CD8-positive, alpha-beta memory T cell (primary cell): ENCODE measurements at regions of chr1 and their contacts with region 1.

Region 1: DNA sequence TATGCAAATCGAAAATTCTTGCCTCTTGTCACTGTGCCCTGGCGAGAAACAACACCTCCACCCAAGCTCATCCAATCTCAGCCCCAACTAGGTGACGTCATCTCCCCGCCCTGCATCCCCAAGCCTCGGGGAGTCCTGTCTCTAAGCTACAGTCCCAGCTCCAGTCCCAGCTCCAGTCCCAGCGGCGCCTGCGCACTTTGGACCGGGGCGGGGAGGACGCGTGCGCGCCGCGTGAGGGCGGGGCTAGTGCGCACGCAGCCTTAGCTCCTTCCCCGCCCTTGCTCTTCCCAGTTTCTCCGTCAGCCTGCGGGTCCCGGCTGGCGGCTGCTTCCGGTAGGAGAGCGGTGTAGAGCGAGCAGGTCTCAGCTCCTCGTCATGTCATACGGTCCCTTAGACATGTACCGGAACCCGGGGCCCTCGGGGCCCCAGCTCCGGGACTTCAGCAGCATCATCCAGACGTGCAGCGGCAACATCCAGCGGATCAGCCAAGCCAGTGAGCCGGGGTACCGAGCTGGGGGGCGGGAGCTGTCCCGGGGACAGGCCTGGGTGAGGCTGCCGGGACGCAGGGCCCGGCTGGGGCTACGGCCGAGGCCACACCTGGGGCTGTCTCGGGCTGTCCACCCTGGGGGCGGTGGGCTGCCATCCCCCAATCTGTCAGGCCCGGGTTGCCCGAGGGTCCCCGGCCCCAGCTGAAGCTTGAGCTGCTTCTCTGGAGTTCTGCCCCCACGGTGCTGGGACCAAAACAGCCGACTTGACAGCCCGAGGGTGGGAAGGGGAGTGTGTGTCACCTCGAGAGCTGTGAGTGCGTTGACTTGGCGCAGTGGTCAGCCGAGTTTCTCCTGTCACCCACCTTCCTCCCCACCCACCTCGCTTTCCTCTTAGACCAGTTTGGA is at the start of gene STX12:
- DNase-seq: peak; percentile 98 to 99 (median 98)
- H3K4me3 ChIP-seq: peak within 1 kb of the TSS; percentile 95
- H3K4me3 Mint-ChIP-seq: peak within 1 kb of the TSS; percentile 89 to 97 (median 94)
- H3K27ac ChIP-seq: peak within 1 kb of the TSS; percentile 95
- H3K27ac Mint-ChIP-seq: peak within 1 kb of the TSS; percentile 86 to 99 (median 98)
- H3K4me1 ChIP-seq: peaks cover 19% of the 10 kb centered on the region
- H3K4me1 Mint-ChIP-seq: peaks cover 30 to 48% (median 43%) of the 10 kb centered on the region in 3 donors
- H3K27me3 ChIP-seq: no peaks in the 10 kb centered on the region
- H3K27me3 Mint-ChIP-seq: peaks cover 0 to 2% of the 10 kb centered on the region in 2 donors
- total RNA-seq, gene STX12: 21.3 to 23.4 TPM

Region 2: GRCh38 chr1:27725374-27726173 is 47.6 kb before region 1 on chr1 and contains the start of gene FAM76A:
- CTCF ChIA-PET with region 1: interaction called, 22 read pairs
- POLR2A ChIA-PET with region 1: interaction called, 43 read pairs
- DNase-seq: peak; percentile 99 to 100 (median 100)
- H3K4me3 ChIP-seq: peak within 1 kb of the TSS; percentile 66
- H3K4me3 Mint-ChIP-seq: peak within 1 kb of the TSS; percentile 87 to 95 (median 91)
- H3K27ac ChIP-seq: peak within 1 kb of the TSS; percentile 87
- H3K27ac Mint-ChIP-seq: peak within 1 kb of the TSS; percentile 94 to 99 (median 98)
- H3K4me1 ChIP-seq: peaks cover 18% of the 10 kb centered on the region
- H3K4me1 Mint-ChIP-seq: peaks cover 21 to 35% (median 24%) of the 10 kb centered on the region in 3 donors
- H3K27me3 ChIP-seq: no peaks in the 10 kb centered on the region
- H3K27me3 Mint-ChIP-seq: no peaks in the 10 kb centered on the region
- total RNA-seq, gene FAM76A: 13.2 to 13.7 TPM

Region 3: GRCh38 chr1:27816921-27817630 is 43.9 kb after region 1 on chr1:
- CTCF ChIA-PET with region 1: no interaction called
- POLR2A ChIA-PET with region 1: no interaction called
- DNase-seq: no peak
- H3K4me3 ChIP-seq: no peak overlapping the region
- H3K4me3 Mint-ChIP-seq: no peak overlapping the region
- H3K27ac ChIP-seq: no peak overlapping the region
- H3K27ac Mint-ChIP-seq: no peak overlapping the region
- H3K4me1 ChIP-seq: no peaks in the 10 kb centered on the region
- H3K4me1 Mint-ChIP-seq: no peaks in the 10 kb centered on the region
- H3K27me3 ChIP-seq: no peaks in the 10 kb centered on the region
- H3K27me3 Mint-ChIP-seq: no peaks in the 10 kb centered on the region

Region 4: DNA sequence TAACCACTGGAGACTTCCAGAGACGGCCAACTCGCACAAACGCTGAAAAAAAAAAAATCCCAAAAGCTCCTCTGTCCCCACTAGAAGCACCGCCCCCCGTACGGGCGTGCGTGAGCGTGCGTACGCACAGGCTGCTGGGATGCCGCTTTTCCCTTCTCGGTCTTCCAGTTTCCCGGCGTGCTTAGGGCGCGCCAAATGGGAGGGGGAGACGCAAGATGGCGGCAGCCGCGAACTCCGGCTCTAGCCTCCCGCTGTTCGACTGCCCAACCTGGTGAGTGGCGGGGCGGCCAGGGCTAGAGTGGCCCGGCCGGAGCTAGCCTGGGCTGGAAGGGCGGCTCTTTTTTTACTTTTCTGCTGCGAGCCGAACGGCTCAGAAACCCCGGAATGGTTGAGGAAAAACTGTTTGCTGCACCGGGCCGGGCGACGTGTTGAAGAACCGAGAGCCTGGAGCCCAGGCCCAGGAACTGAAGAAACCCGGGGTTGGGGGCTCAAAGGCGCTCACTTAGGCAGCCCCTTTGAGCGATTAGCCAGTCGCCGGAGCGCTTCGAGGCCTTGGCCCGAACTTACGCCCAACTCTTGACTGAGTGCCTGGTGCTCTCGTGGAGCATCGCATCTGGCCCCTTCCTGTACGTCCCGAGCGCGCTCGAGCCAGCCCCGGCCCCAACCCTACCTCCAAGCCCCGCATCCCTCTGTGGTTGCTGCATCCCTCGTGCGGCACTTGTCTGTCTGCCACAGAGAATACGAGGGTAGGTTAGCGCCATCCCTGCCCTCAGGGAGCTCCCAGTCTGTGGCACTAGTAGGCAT is 57.6 kb after region 1 on chr1 and contains the start of gene PPP1R8:
- CTCF ChIA-PET with region 1: no interaction called
- POLR2A ChIA-PET with region 1: interaction called, 11 read pairs
- DNase-seq: peak; percentile 76 to 89 (median 83)
- H3K4me3 ChIP-seq: peak within 1 kb of the TSS; percentile 74
- H3K4me3 Mint-ChIP-seq: peak within 1 kb of the TSS; percentile 91 to 99 (median 94)
- H3K27ac ChIP-seq: peak within 1 kb of the TSS; percentile 84
- H3K27ac Mint-ChIP-seq: peak within 1 kb of the TSS; percentile 84 to 99 (median 94)
- H3K4me1 ChIP-seq: peaks cover 33% of the 10 kb centered on the region
- H3K4me1 Mint-ChIP-seq: peaks cover 26 to 50% (median 37%) of the 10 kb centered on the region in 3 donors
- H3K27me3 ChIP-seq: no peaks in the 10 kb centered on the region
- H3K27me3 Mint-ChIP-seq: no peaks in the 10 kb centered on the region
- total RNA-seq, gene PPP1R8: 66.3 to 70.0 TPM

Region 5: GRCh38 chr1:27940870-27941556 is 167.8 kb after region 1 on chr1:
- CTCF ChIA-PET with region 1: no interaction called
- POLR2A ChIA-PET with region 1: no interaction called
- DNase-seq: no peak
- H3K4me3 ChIP-seq: no peak overlapping the region
- H3K4me3 Mint-ChIP-seq: no peak overlapping the region
- H3K27ac ChIP-seq: no peak overlapping the region
- H3K27ac Mint-ChIP-seq: peak overlapping the region in 6 of 8 donors; percentile 24 to 91 (median 84)
- H3K4me1 ChIP-seq: peaks cover 32% of the 10 kb centered on the region
- H3K4me1 Mint-ChIP-seq: peaks cover 26 to 40% (median 29%) of the 10 kb centered on the region in 3 donors
- H3K27me3 ChIP-seq: no peaks in the 10 kb centered on the region
- H3K27me3 Mint-ChIP-seq: peaks cover 0 to under 1% of the 10 kb centered on the region in 2 donors